Ascending aorta (tissue), 2 donors: ENCODE measurements at regions of chr12 and their contacts with region 1.

Region 1: DNA sequence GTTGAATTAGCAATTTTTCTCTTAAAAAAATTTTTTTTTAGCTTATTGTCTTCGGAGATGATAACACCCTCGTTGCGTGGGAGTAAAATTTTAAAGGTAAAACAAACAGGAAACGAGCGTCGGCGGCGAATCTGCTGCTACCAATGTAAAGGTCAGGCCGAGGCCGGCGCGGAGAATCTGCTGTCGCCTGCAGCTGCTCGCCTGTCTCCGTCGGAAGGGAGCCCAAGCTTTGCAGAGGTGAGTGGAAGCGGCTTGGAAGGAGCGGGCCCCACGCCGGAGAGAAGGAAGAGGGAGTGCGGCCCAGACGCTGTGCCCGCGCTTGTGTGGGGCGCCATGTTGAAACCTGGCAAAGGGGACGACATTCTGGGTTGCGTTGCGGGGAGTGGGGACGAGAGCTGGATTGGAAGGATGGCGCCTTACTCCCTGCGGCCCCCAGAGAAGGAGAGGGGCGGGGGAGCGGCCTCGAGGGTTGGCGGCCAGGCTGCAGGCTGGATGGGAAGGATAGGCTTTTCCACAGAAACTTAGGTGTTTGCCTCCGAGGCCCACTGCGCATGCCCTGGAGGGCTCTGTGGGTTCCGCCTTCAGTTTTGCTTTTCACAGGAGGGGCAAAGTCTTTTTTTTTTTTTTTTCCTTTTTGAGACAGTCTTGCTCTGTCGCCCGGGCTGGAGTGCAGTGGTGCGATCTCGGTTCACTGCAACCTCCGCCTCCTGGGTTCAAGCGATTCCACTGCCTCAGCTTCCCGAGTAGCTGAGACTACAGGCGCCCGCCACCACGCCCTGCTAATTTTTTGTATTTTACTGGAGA is at the start of gene SNRNP35:
- DNase-seq: peak; percentile 31 to 83
- H3K4me3 ChIP-seq: peak within 1 kb of the TSS; percentile 82 to 93
- H3K27ac ChIP-seq: peak within 1 kb of the TSS; percentile 97 to 99
- H3K4me1 ChIP-seq: peaks cover 0 to 12% of the 10 kb centered on the region in 2 donors
- H3K27me3 ChIP-seq: no peaks in the 10 kb centered on the region
- CTCF ChIP-seq: no peak
- total RNA-seq, gene SNRNP35: 5.9 TPM

Region 2: GRCh38 chr12:123445388-123446351 is 12.5 kb before region 1 on chr12:
- intact Hi-C with region 1: no loop called
- DNase-seq: peak in 1 of 2 donors; percentile 88
- H3K4me3 ChIP-seq: peak overlapping the region in 1 of 2 donors; percentile 0
- H3K27ac ChIP-seq: peak overlapping the region; percentile 73 to 79
- H3K4me1 ChIP-seq: peaks cover 8 to 31% of the 10 kb centered on the region in 2 donors
- H3K27me3 ChIP-seq: no peaks in the 10 kb centered on the region
- CTCF ChIP-seq: no peak

Region 3: DNA sequence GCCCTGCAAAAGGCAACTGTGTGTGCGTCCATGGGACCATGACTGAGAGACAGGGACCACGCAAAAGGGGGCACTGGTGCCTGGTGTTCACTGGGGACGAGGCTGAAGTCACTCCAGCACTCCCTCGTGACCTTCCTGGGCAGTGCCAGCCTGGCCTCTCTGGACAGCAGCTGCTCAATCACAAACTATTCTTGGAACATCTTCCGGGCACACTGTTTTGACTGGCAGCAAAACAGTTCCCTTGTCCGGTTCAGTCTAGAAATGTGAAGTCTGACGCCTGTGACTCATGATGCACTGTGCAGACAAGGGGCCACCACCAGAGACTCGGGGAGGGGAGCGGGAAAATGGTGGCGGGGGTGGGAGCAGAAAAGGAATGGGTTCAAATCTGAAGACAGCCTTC is 20.6 kb after region 1 on chr12:
- intact Hi-C with region 1: loop called (anchors 1 kb)
- DNase-seq: peak; percentile 72 to 92
- H3K4me3 ChIP-seq: peak overlapping the region; percentile 6 to 46
- H3K27ac ChIP-seq: peak overlapping the region; percentile 93 to 97
- H3K4me1 ChIP-seq: peaks cover 24 to 55% of the 10 kb centered on the region in 2 donors
- H3K27me3 ChIP-seq: no peaks in the 10 kb centered on the region
- CTCF ChIP-seq: no peak

Region 4: DNA sequence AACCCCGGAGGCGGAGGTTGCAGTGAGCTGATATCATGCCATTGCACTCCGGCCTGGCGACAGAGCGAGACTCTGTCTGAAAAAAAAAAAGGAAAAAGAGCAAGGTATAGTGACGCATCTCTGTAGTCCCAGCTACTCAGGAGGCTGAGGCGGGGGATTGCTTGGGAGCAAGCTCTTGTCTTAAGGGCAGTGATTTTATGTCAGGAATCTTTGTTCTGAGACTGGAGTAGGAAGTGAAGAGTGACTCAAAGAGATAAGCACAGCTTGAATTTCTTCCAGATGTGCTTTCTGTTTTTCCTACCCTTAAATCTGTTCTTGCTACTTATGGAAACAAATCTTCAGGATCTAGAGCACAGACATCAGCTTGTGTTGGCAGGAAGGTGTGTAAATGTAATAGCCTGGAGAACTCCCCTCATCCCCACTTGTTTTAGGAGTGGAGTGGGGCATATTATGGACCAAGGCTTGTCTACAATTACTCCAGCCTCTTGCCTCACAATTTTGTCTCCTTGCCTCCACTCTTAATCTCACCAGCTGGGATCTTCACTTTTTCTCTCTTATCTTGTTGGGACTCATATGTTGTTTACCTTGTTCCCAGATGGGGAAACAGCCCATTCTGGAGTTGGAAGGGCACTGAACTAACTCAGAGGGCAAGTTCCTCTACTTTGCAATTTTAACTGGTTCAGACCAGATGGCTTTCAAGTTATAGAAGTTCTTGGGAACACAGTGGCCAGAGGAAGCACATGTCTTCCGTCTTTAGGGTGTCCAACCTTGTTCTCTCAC is 133.7 kb after region 1 on chr12:
- intact Hi-C with region 1: no loop called
- DNase-seq: peak in 1 of 2 donors; percentile 37
- H3K4me3 ChIP-seq: no peak overlapping the region
- H3K27ac ChIP-seq: no peak overlapping the region
- H3K4me1 ChIP-seq: peaks cover 3 to 27% of the 10 kb centered on the region in 2 donors
- H3K27me3 ChIP-seq: no peaks in the 10 kb centered on the region
- CTCF ChIP-seq: no peak